Heart right ventricle (tissue), 16 donors: ENCODE measurements at regions of chr2 and their contacts with region 1.

Region 1: GRCh38 chr2:219294356-219295351 is 14.5 kb downstream of the PTPRN start:
- DNase-seq: peak; percentile 81 to 90
- ATAC-seq: peak; percentile 86 to 92 (median 89)
- H3K4me3 ChIP-seq: peak overlapping the region; percentile 43 to 67 (median 62)
- H3K27ac ChIP-seq: peak overlapping the region; percentile 8 to 90 (median 82)
- H3K4me1 ChIP-seq: peaks cover 3 to 24% (median 12%) of the 10 kb centered on the region in 9 donors
- H3K27me3 ChIP-seq: peaks cover 0 to 13% (median 8%) of the 10 kb centered on the region in 7 donors
- CTCF ChIP-seq: peak; percentile 99 to 100 (median 99)

Region 2: DNA sequence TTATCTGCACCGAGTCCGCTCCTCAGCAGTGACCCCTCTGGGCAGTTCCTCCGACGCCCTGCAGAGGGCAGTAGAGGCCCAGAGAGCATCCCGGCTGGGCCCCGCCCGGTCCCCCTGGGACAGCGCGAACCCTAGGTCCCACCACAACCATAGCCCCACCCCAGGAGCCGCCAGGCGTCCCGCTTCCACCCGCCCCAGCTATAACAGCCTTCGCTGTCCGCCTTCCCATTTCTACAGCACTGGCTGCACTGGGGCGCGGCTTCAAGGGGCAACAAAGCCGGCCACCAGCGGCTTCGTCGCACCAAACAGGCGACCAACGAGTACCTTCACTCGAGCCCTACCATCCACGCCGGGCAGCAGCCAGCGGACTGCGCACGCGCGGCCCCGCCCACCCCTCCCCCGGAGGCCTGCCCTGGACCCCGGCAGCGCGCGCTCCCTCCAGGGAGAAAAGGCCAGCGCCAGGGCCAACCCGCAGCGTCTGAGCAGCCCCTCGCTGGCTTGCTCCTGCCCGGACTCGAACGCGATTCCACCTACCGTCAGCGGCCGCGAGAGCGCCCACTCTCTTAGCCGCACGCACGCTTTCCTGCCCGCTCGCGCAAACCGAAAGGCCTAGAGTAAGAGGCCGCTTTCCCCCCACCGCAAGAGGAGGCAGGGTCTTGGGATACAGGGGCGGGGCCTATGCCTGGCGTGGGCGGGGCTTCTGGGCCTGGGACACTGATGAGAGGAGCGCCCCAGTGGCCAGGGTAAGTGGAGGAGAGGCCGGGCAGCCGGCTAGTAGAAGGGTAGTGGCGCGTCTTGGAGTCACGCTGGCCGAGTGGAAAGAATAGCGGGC is 134.3 kb before region 1 on chr2 and contains the start of gene NHEJ1:
- intact Hi-C with region 1: loop called (anchors 1 to 2 kb)
- DNase-seq: peak; percentile 97 to 98
- ATAC-seq: peak; percentile 96 to 98 (median 97)
- H3K4me3 ChIP-seq: peak within 1 kb of the TSS; percentile 40 to 74 (median 62)
- H3K27ac ChIP-seq: peak within 1 kb of the TSS; percentile 80 to 94 (median 92)
- H3K4me1 ChIP-seq: peaks cover 0 to 19% (median 11%) of the 10 kb centered on the region in 9 donors
- H3K27me3 ChIP-seq: no peaks in the 10 kb centered on the region
- CTCF ChIP-seq: peak; percentile 99 to 100 (median 99)
- total RNA-seq, gene NHEJ1: 4.7 to 12.0 (median 7.1) TPM

Region 3: GRCh38 chr2:219229305-219230058 is 65.2 kb before region 1 on chr2 and contains the starts of genes ANKZF1 and ATG9A:
- intact Hi-C with region 1: loop called in 2 of 10 experiments (anchors 5 to 10 kb)
- DNase-seq: peak; percentile 98 to 99
- ATAC-seq: peak; percentile 98 to 99 (median 99)
- H3K4me3 ChIP-seq: peak within 1 kb of the TSS; percentile 73 to 91 (median 82)
- H3K27ac ChIP-seq: peak within 1 kb of the TSS; percentile 89 to 99 (median 96)
- H3K4me1 ChIP-seq: peaks cover 15 to 49% (median 32%) of the 10 kb centered on the region in 9 donors
- H3K27me3 ChIP-seq: no peaks in the 10 kb centered on the region
- CTCF ChIP-seq: no peak
- total RNA-seq, gene ANKZF1: 16.4 to 36.8 (median 25.5) TPM
- total RNA-seq, gene ATG9A: 64.5 to 103 (median 76.4) TPM

Region 4: GRCh38 chr2:219245148-219245898 is 49.3 kb before region 1 on chr2 and contains the starts of genes GLB1L and STK16:
- intact Hi-C with region 1: loop called in 2 of 10 experiments (anchors 1 to 2 kb)
- DNase-seq: peak; percentile 95
- ATAC-seq: peak; percentile 94 to 97 (median 96)
- H3K4me3 ChIP-seq: peak within 1 kb of the TSS; percentile 74 to 96 (median 85)
- H3K27ac ChIP-seq: peak within 1 kb of the TSS; percentile 49 to 99 (median 95)
- H3K4me1 ChIP-seq: peaks cover 24 to 56% (median 43%) of the 10 kb centered on the region in 9 donors
- H3K27me3 ChIP-seq: no peaks in the 10 kb centered on the region
- CTCF ChIP-seq: no peak
- total RNA-seq, gene GLB1L: 1.6 to 5.2 (median 2.6) TPM
- total RNA-seq, gene STK16: 14.6 to 23.1 (median 19.7) TPM

Region 5: GRCh38 chr2:219253753-219254590 is 40.7 kb before region 1 on chr2 and contains the start of gene TUBA4A:
- intact Hi-C with region 1: loop called in 2 of 10 experiments (anchors 1 to 2 kb)
- DNase-seq: peak; percentile 83 to 86
- ATAC-seq: peak; percentile 90 to 95 (median 94)
- H3K4me3 ChIP-seq: peak within 1 kb of the TSS; percentile 54 to 95 (median 76)
- H3K27ac ChIP-seq: peak within 1 kb of the TSS in 9 of 10 donors; percentile 6 to 99 (median 84)
- H3K4me1 ChIP-seq: peaks cover 25 to 58% (median 48%) of the 10 kb centered on the region in 9 donors
- H3K27me3 ChIP-seq: peaks cover 0 to 35% (median 5%) of the 10 kb centered on the region in 7 donors
- CTCF ChIP-seq: peak in 2 of 9 donors; percentile 12 to 25
- total RNA-seq, gene TUBA4A: 76.0 to 245 (median 145) TPM

Region 6: DNA sequence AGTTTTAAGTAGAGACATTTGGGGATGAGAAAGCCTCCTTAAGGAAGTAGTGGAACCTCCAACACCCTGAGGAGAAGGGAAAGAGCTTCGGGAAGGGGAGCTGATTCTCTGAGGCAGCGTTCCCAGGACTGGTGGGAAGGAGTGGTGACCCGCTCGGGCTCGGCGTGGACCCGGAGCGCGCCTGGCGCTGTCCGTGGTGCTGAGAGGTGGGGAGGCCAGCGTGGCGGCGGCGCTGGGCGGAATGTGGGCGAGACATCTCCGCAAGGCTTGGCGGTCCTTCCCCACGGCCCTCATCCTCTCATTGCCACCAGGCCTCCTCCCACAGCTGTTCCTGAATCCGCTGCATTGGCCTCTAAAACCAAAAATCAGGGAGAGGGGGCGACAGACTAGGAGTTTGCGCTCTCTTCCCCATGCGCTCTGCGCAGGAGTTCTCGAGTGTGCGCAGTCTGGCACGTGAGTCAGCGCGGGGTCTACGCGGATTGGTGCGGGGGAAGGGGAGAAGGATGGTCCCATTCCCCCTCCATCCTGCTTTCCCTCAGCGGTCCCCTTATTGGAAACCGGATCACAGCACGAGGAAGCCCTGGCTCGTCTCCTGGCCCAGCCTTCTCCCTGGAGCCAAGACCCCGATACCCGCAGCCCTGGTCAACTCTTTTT is 37.0 kb after region 1 on chr2:
- intact Hi-C with region 1: no loop called
- DNase-seq: peak; percentile 13 to 40
- ATAC-seq: peak in 6 of 8 donors; percentile 65 to 83 (median 76)
- H3K4me3 ChIP-seq: no peak overlapping the region
- H3K27ac ChIP-seq: no peak overlapping the region
- H3K4me1 ChIP-seq: peaks cover 0 to 7% (median 0%) of the 10 kb centered on the region in 9 donors
- H3K27me3 ChIP-seq: peaks cover 0 to 88% (median 63%) of the 10 kb centered on the region in 7 donors
- CTCF ChIP-seq: no peak